ENCODE measurements at regions of chr18 and their contacts with region 1.

Region 1: DNA sequence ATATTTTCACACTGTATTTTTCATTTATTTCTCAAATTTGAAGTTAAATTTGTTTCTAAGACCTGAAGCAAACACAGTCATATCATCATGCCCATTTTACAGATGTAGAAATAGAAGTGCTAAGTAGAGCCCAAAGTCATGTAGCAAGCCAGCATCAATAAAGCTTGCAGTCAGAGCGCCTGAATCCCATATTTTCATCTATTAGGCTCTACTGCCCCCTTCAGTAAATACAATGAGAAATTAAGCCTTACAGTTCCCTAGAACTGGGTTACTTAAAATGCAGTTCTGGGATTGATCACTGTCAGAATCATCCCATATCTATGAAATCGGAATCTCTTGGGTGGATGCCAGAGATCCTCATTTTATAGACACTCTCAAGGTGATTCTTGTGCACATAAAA is 419.9 kb downstream of the TGIF1 start:
- DNase-seq: peak in 1 of 2 donors; percentile 69
- H3K4me3 ChIP-seq: no peak overlapping the region
- H3K27ac ChIP-seq: no peak overlapping the region
- H3K4me1 ChIP-seq: peaks cover 0 to 5% (median 2%) of the 10 kb centered on the region in 4 donors
- H3K27me3 ChIP-seq: peaks cover 0 to 3% (median 0%) of the 10 kb centered on the region in 3 donors
- CTCF ChIP-seq: peak in 4 of 7 experiments; percentile 15 to 58 (median 50)
- EP300 ChIP-seq: no peak
- POLR2A ChIP-seq: no peak

Region 2: GRCh38 chr18:3692113-3692621 is 177.7 kb before region 1 on chr18:
- intact Hi-C with region 1: loop called (anchors 10 kb)
- DNase-seq: no peak
- H3K4me3 ChIP-seq: no peak overlapping the region
- H3K27ac ChIP-seq: no peak overlapping the region
- H3K4me1 ChIP-seq: peaks cover 0 to 6% (median 0%) of the 10 kb centered on the region in 4 donors
- H3K27me3 ChIP-seq: no peaks in the 10 kb centered on the region
- CTCF ChIP-seq: no peak
- EP300 ChIP-seq: no peak
- POLR2A ChIP-seq: no peak

Region 3: GRCh38 chr18:3728704-3729437 is 141.0 kb before region 1 on chr18:
- intact Hi-C with region 1: no loop called
- DNase-seq: no peak
- H3K4me3 ChIP-seq: no peak overlapping the region
- H3K27ac ChIP-seq: no peak overlapping the region
- H3K4me1 ChIP-seq: peaks cover 3 to 8% (median 4%) of the 10 kb centered on the region in 4 donors
- H3K27me3 ChIP-seq: no peaks in the 10 kb centered on the region
- CTCF ChIP-seq: no peak
- EP300 ChIP-seq: no peak
- POLR2A ChIP-seq: no peak

Region 4: GRCh38 chr18:3995476-3996102 is 125.7 kb after region 1 on chr18:
- intact Hi-C with region 1: loop called (anchors 10 kb)
- DNase-seq: peak; percentile 64 to 90
- H3K4me3 ChIP-seq: no peak overlapping the region
- H3K27ac ChIP-seq: no peak overlapping the region
- H3K4me1 ChIP-seq: peaks cover 0 to 7% (median 0%) of the 10 kb centered on the region in 4 donors
- H3K27me3 ChIP-seq: no peaks in the 10 kb centered on the region
- CTCF ChIP-seq: peak in 5 of 7 experiments; percentile 43 to 79 (median 72)
- EP300 ChIP-seq: no peak
- POLR2A ChIP-seq: no peak